ENCODE measurements at regions of chr5 and their contacts with region 1.

Region 1: DNA sequence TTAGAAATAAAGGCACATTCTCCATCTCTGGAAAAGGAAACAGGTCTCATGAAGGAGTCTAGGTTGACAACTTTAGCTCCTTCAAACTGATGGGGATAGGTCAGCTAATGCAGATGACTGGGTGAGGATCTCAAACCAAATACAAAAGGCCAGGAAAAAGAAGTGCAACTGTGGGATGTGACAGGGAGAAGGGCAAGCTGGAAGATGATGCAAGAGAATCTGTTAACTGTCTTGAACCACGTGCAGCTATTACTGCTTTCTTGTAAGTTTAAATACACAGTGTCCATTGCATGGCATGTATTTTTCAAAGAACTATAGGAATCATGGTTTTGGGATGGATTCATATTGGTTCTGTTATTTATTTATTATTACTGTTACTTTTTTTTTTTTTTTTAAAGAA is 331.8 kb downstream of the NDUFS4 start:
- DNase-seq: no peak
- ATAC-seq: no peak
- H3K4me3 ChIP-seq: no peak overlapping the region
- H3K4me3 Mint-ChIP-seq: no peak overlapping the region
- H3K27ac ChIP-seq: no peak overlapping the region
- H3K27ac Mint-ChIP-seq: no peak overlapping the region
- H3K4me1 ChIP-seq: no peaks in the 10 kb centered on the region
- H3K4me1 Mint-ChIP-seq: no peaks in the 10 kb centered on the region
- H3K27me3 ChIP-seq: no peaks in the 10 kb centered on the region
- H3K27me3 Mint-ChIP-seq: no peaks in the 10 kb centered on the region
- CTCF ChIP-seq: no peak

Region 2: GRCh38 chr5:53826504-53826903 is 65.7 kb before region 1 on chr5:
- CTCF ChIA-PET with region 1: no interaction called
- POLR2A ChIA-PET with region 1: no interaction called
- intact Hi-C with region 1: loop called in 1 of 2 experiments (anchors 5 kb)
- DNase-seq: no peak
- ATAC-seq: no peak
- H3K4me3 ChIP-seq: no peak overlapping the region
- H3K4me3 Mint-ChIP-seq: no peak overlapping the region
- H3K27ac ChIP-seq: no peak overlapping the region
- H3K27ac Mint-ChIP-seq: no peak overlapping the region
- H3K4me1 ChIP-seq: no peaks in the 10 kb centered on the region
- H3K4me1 Mint-ChIP-seq: no peaks in the 10 kb centered on the region
- H3K27me3 ChIP-seq: no peaks in the 10 kb centered on the region
- H3K27me3 Mint-ChIP-seq: no peaks in the 10 kb centered on the region
- CTCF ChIP-seq: no peak

Measured in CD8-positive, alpha-beta T cell (primary cell).